GM12878 (cell line): ENCODE measurements at regions of chr10 and their contacts with region 1.

Region 1: GRCh38 chr10:4046030-4046429 is 261.0 kb upstream of the KLF6 start:
- DNase-seq: no peak
- ATAC-seq: peak; percentile 97
- H3K4me3 ChIP-seq: no peak overlapping the region
- H3K27ac ChIP-seq: 0 out of 2 replicates have a peak overlapping the region, but pooled peaks have one; percentile 4
- H3K4me1 ChIP-seq: peaks cover 3% of the 10 kb centered on the region; the same call in 1 of the 2 replicates
- H3K27me3 ChIP-seq: no peaks in the 10 kb centered on the region
- CTCF ChIP-seq: no peak
- EP300 ChIP-seq: 0 out of 4 replicates have a peak, but pooled peaks of 1 of the 2 experiments have one; percentile 36
- POLR2A ChIP-seq: no peak
- RAD21 ChIP-seq: no peak

Region 2: GRCh38 chr10:3889961-3890522 is 156.0 kb before region 1 on chr10:
- CTCF ChIA-PET with region 1: no interaction called
- POLR2A ChIA-PET with region 1: no interaction called
- RAD21 ChIA-PET with region 1: no interaction called
- SMC1A ChIA-PET with region 1: no interaction called
- in situ Hi-C with region 1: no loop called
- intact Hi-C with region 1: no loop called
- DNase-seq: no peak
- ATAC-seq: no peak
- H3K4me3 ChIP-seq: no peak overlapping the region
- H3K27ac ChIP-seq: no peak overlapping the region
- H3K4me1 ChIP-seq: peaks cover 20% of the 10 kb centered on the region
- H3K27me3 ChIP-seq: no peaks in the 10 kb centered on the region
- CTCF ChIP-seq: no peak
- EP300 ChIP-seq: no peak
- POLR2A ChIP-seq: no peak
- RAD21 ChIP-seq: no peak

Region 3: GRCh38 chr10:4034907-4035598 is 11.0 kb before region 1 on chr10:
- CTCF ChIA-PET with region 1: interaction called, 4 read pairs
- POLR2A ChIA-PET with region 1: interaction called, 4 read pairs
- RAD21 ChIA-PET with region 1: interaction called, 6 read pairs
- SMC1A ChIA-PET with region 1: interaction called, 11 read pairs
- in situ Hi-C with region 1: no loop called
- intact Hi-C with region 1: no loop called
- DNase-seq: no peak
- ATAC-seq: 0 out of 3 replicates have a peak, but pooled peaks have one; percentile 21
- H3K4me3 ChIP-seq: no peak overlapping the region
- H3K27ac ChIP-seq: no peak overlapping the region
- H3K4me1 ChIP-seq: peaks cover 24% of the 10 kb centered on the region
- H3K27me3 ChIP-seq: no peaks in the 10 kb centered on the region
- CTCF ChIP-seq: no peak
- EP300 ChIP-seq: no peak
- POLR2A ChIP-seq: no peak
- RAD21 ChIP-seq: no peak